ENCODE measurements at regions of chr4 and their contacts with region 1.

Region 1: DNA sequence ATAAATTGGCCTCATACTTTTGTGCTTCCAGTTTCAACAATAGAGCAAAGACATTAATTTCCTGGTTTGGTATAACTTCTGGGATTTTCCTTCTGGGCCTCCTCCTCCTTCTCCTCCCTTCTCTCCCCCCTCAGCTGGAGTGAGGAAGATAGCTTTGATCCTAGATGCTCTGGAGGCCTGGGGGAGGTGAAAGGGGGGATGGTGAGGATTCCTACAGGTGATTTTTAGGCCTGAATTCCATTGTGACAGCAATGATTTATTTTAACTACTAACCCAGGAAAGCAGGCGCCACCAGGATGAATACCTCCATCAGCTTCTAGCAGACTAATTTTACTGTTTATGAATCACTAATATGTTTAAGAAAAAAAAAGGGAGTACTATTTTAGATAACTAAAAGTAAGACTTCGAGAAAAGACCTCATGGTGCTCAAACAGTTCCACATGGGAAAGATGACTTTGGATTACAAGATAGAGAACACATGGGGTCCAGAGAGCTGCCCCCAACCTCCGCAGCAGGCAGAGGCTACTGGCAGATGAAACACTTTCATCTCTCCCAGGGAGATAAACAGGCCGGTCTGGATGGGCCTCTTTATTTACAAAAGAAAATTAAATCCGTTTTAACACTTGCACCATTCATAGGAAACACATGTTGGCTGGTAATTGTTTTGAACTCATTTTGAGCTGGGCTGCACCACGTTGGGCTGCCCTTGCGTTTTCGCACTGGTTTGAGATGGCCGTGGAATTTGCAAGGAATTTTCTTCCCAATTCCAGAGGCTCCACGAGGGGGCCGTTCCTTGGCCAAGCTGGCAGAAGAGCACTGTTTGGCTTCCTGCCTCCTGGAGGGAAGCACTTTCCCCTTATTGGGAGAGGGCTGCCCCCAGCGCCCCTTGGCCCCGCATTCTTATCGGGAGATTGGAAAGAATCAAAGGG is 125.1 kb upstream of the STX18 start:
- DNase-seq: peak; percentile 65
- ATAC-seq: peak; percentile 44
- H3K4me3 Mint-ChIP-seq: peak overlapping the region; percentile 64
- H3K27ac Mint-ChIP-seq: peak overlapping the region; percentile 98
- H3K4me1 Mint-ChIP-seq: peaks cover 66% of the 10 kb centered on the region
- H3K27me3 Mint-ChIP-seq: no peaks in the 10 kb centered on the region
- CTCF ChIP-seq: no peak

Region 2: GRCh38 chr4:4541661-4542570 is 125.0 kb before region 1 on chr4 and contains the start of gene STX18:
- CTCF ChIA-PET with region 1: interaction called, 10 read pairs
- POLR2A ChIA-PET with region 1: no interaction called
- DNase-seq: peak; percentile 88
- ATAC-seq: peak; percentile 95
- H3K4me3 Mint-ChIP-seq: peak within 1 kb of the TSS; percentile 98
- H3K27ac Mint-ChIP-seq: peak within 1 kb of the TSS; percentile 98
- H3K4me1 Mint-ChIP-seq: peaks cover 23% of the 10 kb centered on the region
- H3K27me3 Mint-ChIP-seq: no peaks in the 10 kb centered on the region
- CTCF ChIP-seq: no peak
- total RNA-seq, gene STX18: 14.1 to 16.9 TPM (median 16.7 TPM) in 3 replicates

Region 3: DNA sequence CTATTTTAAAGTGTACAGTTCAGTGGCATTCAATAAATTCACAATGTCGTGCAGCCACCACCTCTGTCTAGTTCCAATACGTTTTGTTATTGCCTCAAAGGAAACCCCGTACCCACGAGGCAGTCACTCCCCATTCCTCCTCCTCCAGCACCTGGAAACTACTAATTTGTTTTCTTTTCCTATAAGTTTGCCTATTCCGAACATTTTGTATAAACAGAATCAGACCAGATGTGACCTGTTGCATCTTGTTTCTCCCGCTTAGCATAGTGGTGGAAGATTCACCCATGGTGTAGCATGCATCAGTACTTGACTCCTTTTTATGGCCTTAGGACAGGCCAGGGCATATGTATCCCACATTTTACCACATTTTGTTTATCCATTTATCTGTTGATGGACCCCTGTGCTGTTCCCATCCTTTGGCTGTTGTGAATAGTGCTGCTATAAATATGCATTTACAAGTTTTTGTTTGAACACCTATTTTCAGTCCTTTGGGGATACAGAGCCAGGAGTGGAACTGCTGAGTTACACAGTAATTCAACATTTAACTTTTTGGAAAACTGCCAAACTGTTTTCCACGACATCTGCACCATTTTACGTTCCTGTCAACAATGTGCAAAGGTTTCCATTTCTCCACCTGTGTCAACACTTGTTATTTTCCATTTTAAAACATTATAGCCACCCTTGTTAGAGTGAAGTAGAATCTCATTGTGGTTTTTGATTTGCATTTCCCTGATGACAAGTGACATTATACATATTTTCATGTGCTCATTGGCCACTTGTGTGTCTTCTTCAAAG is 67.3 kb before region 1 on chr4:
- CTCF ChIA-PET with region 1: no interaction called
- POLR2A ChIA-PET with region 1: no interaction called
- DNase-seq: no peak
- ATAC-seq: no peak
- H3K4me3 Mint-ChIP-seq: no peak overlapping the region
- H3K27ac Mint-ChIP-seq: no peak overlapping the region
- H3K4me1 Mint-ChIP-seq: peaks cover 4% of the 10 kb centered on the region
- H3K27me3 Mint-ChIP-seq: no peaks in the 10 kb centered on the region; the same call in 1 of the 2 replicates
- CTCF ChIP-seq: no peak

Region 4: DNA sequence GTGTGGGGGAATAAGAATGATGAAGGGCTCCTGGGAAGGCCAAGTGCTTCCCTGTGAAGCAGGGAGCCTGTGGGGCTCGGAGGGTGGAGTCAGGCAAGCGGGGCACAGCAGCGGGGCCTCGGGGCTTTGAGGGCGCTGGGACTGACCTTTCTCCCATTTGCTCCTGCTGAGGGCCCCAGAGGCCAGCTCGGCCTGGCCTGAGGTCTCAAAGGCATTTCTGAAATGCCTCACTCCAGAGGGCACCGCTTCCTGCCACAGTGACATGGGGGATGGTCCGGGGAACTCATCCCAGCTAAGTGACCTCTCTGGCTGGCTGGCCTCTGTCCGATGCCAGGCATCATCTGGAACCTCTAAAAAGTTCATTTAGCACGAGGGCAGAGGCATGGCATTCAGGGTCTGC is 26.3 kb before region 1 on chr4:
- CTCF ChIA-PET with region 1: interaction called, 19 read pairs
- POLR2A ChIA-PET with region 1: interaction called, 3 read pairs
- DNase-seq: peak; percentile 52
- ATAC-seq: peak; percentile 72
- H3K4me3 Mint-ChIP-seq: peak overlapping the region; percentile 58
- H3K27ac Mint-ChIP-seq: peak overlapping the region; percentile 83
- H3K4me1 Mint-ChIP-seq: peaks cover 43% of the 10 kb centered on the region
- H3K27me3 Mint-ChIP-seq: peaks cover 5% of the 10 kb centered on the region; the same call in 1 of the 2 replicates
- CTCF ChIP-seq: no peak

Region 5: DNA sequence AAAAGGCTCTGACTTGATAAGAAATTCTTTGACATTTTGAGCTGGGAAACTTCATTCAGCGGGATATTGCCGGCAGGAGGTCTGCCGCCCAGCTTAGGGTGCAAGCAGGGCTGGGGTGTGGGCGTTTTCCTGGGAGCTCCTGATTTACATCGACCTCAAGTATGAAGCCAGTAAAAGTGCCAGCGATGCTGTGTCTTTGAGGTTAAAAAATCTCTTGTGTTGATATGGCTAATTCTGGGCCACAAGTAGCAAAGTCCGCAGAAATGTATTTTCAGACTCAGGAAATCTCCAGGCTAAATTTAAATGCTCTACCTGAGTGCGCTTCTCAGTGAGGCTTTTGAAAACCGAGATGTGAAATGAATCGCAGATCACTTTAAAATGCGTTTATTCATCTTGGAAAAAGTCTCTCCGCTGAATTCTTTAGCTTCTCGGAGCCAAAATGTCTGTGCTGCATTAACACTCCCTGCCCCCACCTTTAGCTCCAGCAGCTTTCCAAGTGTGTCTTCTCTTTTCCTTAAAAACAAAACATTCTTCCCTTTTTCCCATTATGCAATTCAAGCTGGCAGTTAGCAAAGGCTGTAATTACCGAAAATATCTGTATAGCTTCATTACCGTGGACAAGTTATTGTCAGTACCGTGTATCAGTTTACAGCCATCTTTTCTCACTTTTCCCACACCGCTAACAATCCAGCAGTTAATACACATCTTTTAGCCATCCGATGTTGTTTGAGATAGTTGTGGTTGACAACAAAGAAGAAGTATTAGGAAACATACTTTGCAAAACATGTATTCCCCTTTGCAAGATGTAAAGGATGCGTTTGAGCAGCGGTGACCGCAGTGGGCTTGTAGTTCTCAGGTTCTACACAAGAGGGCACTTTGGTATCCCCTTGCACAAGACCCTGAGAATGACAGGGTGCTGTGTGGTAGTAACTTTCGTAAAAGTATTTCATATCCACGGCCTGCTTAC is 10.9 kb after region 1 on chr4:
- CTCF ChIA-PET with region 1: interaction called, 27 read pairs
- POLR2A ChIA-PET with region 1: no interaction called
- DNase-seq: peak; percentile 61
- ATAC-seq: peak; percentile 86
- H3K4me3 Mint-ChIP-seq: peak overlapping the region; percentile 49
- H3K27ac Mint-ChIP-seq: no peak overlapping the region; the same call in 1 of the 2 replicates
- H3K4me1 Mint-ChIP-seq: peaks cover 25% of the 10 kb centered on the region
- H3K27me3 Mint-ChIP-seq: no peaks in the 10 kb centered on the region; the same call in 1 of the 2 replicates
- CTCF ChIP-seq: peak; percentile 75

Region 6: GRCh38 chr4:4694296-4694772 is 27.4 kb after region 1 on chr4:
- CTCF ChIA-PET with region 1: interaction called, 17 read pairs
- POLR2A ChIA-PET with region 1: interaction called, 4 read pairs
- DNase-seq: peak; percentile 49
- ATAC-seq: peak; percentile 96
- H3K4me3 Mint-ChIP-seq: no peak overlapping the region
- H3K27ac Mint-ChIP-seq: no peak overlapping the region
- H3K4me1 Mint-ChIP-seq: peaks cover 18% of the 10 kb centered on the region
- H3K27me3 Mint-ChIP-seq: peaks cover 3% of the 10 kb centered on the region; the same call in 1 of the 2 replicates
- CTCF ChIP-seq: no peak

Region 7: DNA sequence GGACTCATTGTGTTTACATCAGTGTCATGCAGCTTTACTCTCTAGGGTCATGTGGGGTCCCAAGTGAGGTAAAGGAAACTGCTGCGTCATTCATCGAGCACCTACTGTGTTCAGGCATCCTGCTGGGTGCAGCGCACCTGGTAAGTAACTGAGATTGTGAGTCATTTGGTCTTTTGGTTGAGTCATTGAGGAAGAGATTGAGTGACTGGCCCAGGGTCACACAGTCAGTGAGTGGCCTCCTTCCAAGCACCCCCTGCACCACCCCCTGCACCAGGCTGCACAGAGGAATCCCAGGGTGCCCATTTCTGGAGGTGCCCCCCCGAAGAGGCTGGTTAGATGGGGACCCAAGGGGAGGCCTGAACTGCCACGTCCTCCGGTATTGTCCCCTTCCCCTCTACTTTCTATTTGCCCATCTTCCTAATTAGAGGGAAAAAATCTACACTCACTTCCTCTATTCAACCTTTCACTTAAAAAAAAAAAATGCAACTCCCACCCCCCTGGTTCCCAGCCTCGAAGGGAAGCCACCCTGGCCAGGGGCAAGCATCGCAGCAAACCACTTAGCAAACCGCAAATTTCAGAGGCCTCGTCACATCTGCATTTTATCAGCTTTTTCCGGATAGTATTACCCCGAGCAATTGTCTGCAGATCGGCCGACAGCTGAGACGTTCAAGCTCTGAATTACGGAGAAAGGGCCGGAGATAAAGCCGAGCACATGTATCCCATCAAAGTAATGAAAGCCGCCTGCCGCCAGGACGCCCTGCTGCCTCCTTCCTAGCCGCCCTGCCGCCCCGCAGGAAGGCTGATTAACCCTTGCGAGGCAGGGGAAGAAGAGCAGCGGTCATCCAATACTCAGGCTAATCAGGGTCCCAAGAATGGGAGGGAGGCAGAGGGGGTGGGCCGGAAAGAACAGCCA is 96.2 kb after region 1 on chr4:
- CTCF ChIA-PET with region 1: interaction called, 23 read pairs
- POLR2A ChIA-PET with region 1: no interaction called
- DNase-seq: peak; percentile 38
- ATAC-seq: peak; percentile 37
- H3K4me3 Mint-ChIP-seq: peak overlapping the region; percentile 50
- H3K27ac Mint-ChIP-seq: 0 out of 2 replicates have a peak overlapping the region, but pooled peaks have one; percentile 40
- H3K4me1 Mint-ChIP-seq: peaks cover 61% of the 10 kb centered on the region
- H3K27me3 Mint-ChIP-seq: peaks cover 23% of the 10 kb centered on the region
- CTCF ChIP-seq: no peak

Region 8: GRCh38 chr4:4820261-4820660 is 153.3 kb after region 1 on chr4:
- CTCF ChIA-PET with region 1: no interaction called
- POLR2A ChIA-PET with region 1: no interaction called
- DNase-seq: no peak
- ATAC-seq: no peak
- H3K4me3 Mint-ChIP-seq: no peak overlapping the region
- H3K27ac Mint-ChIP-seq: no peak overlapping the region
- H3K4me1 Mint-ChIP-seq: no peaks in the 10 kb centered on the region
- H3K27me3 Mint-ChIP-seq: peaks cover 48% of the 10 kb centered on the region
- CTCF ChIP-seq: no peak

Region 9: GRCh38 chr4:4859843-4860802 is 193.2 kb after region 1 on chr4:
- CTCF ChIA-PET with region 1: interaction called, 17 read pairs
- POLR2A ChIA-PET with region 1: interaction called, 3 read pairs
- DNase-seq: no peak
- ATAC-seq: no peak
- H3K4me3 Mint-ChIP-seq: peak overlapping the region; percentile 66
- H3K27ac Mint-ChIP-seq: no peak overlapping the region
- H3K4me1 Mint-ChIP-seq: peaks cover 56% of the 10 kb centered on the region
- H3K27me3 Mint-ChIP-seq: peaks cover 42% of the 10 kb centered on the region
- CTCF ChIP-seq: no peak

Measured in WTC11 (cell line).